ENCODE measurements at regions of chr3 and their contacts with region 1.

Region 1: GRCh38 chr3:197456261-197457091 is 99.3 kb downstream of the BDH1 start:
- DNase-seq: peak; percentile 85 to 92 (median 91)
- ATAC-seq: peak; percentile 47 to 95 (median 92)
- H3K4me3 ChIP-seq: peak overlapping the region; percentile 27 to 83 (median 61)
- H3K27ac ChIP-seq: peak overlapping the region in 11 of 12 donors; percentile 55 to 86 (median 79)
- H3K4me1 ChIP-seq: peaks cover 0 to 19% (median 8%) of the 10 kb centered on the region in 12 donors
- H3K27me3 ChIP-seq: no peaks in the 10 kb centered on the region
- CTCF ChIP-seq: no peak
- POLR2A ChIP-seq: peak in 1 of 2 donors; percentile 35

Region 2: DNA sequence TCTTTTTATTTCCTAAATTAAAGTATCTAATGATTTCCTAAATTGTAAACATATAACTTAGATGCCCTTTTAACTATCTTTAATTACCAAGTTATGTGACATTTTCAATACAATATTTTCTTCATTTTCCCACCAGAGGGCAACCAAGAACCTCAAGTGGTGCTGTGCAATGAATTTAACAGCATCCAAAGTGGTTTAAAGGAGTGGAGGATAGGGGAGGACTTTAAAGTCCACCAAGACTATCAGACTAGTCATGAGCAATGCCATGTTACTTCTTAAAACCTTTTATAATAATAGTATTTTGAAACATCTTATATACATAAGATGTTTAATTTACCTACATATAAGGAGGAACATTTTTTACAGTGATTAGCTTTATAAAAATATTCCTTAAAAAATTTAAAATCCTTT is 232.4 kb before region 1 on chr3:
- intact Hi-C with region 1: loop called in 2 of 10 experiments (anchors 10 kb)
- DNase-seq: no peak
- ATAC-seq: peak in 2 of 4 donors; percentile 41 to 54
- H3K4me3 ChIP-seq: no peak overlapping the region
- H3K27ac ChIP-seq: no peak overlapping the region
- H3K4me1 ChIP-seq: peaks cover 0 to 50% (median 20%) of the 10 kb centered on the region in 12 donors
- H3K27me3 ChIP-seq: no peaks in the 10 kb centered on the region
- CTCF ChIP-seq: peak; percentile 36 to 70 (median 52)
- POLR2A ChIP-seq: no peak

Region 3: DNA sequence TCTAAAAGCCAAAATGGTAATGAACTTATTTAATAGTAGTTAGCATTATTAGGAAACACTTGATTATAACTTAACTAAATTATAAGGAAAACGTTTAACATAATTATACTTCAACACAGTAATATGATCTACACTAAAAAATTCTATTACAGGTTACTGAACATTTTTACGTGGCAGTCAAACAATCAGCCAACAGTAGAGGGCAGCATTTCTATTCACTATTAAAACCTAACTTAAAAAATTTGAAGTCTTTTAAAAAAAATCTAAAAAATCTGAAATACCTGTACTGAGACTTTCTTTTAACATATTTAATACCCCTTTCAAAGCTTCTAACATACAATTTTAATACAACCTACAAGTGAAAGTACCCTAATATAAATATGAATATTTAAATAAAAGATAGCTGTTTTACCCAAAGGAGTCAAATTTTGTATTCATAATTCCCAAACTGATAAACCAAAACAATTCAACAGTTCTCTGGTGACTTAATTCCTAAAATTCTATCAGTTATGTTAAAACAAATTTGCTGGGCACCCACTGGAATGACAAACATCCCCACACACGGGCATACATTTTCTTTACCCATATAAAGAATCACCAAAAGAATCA is 199.5 kb before region 1 on chr3:
- intact Hi-C with region 1: loop called in 9 of 10 experiments (anchors 1 to 10 kb)
- DNase-seq: peak in 1 of 5 donors; percentile 10
- ATAC-seq: no peak
- H3K4me3 ChIP-seq: no peak overlapping the region
- H3K27ac ChIP-seq: no peak overlapping the region
- H3K4me1 ChIP-seq: peaks cover 0 to 39% (median 20%) of the 10 kb centered on the region in 12 donors
- H3K27me3 ChIP-seq: no peaks in the 10 kb centered on the region
- CTCF ChIP-seq: peak; percentile 61 to 83 (median 74)
- POLR2A ChIP-seq: no peak

Region 4: DNA sequence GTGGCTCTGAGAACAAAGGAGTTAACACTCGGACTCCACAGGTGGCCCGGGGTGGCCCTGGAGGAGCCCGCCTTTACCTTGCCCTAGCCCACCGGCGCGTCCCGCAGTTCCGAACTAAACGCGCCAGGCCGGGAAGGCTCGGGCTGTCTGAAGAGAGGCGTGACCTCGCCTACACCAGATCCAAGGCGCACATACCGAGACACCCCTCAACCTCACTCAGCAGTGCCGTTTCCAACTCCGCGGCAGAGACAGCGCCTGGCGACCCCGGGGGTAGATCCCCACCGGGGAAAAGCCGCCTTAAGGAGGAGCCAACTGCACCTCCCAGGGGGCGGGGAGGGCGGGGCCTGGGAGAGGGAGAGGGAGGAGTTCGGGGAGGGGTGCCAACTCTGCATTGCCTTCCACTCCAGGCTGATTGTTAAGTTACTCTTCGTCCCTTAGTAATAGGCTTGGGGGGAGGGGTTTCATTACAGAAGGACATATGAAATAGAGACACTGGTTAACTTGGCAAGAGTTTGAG is 158.1 kb before region 1 on chr3 and contains the start of gene DLG1:
- intact Hi-C with region 1: loop called in 6 of 10 experiments (anchors 2 to 10 kb)
- DNase-seq: peak; percentile 88 to 92 (median 91)
- ATAC-seq: peak; percentile 88 to 93 (median 89)
- H3K4me3 ChIP-seq: peak within 1 kb of the TSS; percentile 51 to 100 (median 92)
- H3K27ac ChIP-seq: peak within 1 kb of the TSS; percentile 86 to 97 (median 92)
- H3K4me1 ChIP-seq: peaks cover 0 to 36% (median 13%) of the 10 kb centered on the region in 12 donors
- H3K27me3 ChIP-seq: no peaks in the 10 kb centered on the region
- CTCF ChIP-seq: no peak
- POLR2A ChIP-seq: no peak
- total RNA-seq, gene DLG1: 37.1 to 151 (median 63.6) TPM

Region 5: DNA sequence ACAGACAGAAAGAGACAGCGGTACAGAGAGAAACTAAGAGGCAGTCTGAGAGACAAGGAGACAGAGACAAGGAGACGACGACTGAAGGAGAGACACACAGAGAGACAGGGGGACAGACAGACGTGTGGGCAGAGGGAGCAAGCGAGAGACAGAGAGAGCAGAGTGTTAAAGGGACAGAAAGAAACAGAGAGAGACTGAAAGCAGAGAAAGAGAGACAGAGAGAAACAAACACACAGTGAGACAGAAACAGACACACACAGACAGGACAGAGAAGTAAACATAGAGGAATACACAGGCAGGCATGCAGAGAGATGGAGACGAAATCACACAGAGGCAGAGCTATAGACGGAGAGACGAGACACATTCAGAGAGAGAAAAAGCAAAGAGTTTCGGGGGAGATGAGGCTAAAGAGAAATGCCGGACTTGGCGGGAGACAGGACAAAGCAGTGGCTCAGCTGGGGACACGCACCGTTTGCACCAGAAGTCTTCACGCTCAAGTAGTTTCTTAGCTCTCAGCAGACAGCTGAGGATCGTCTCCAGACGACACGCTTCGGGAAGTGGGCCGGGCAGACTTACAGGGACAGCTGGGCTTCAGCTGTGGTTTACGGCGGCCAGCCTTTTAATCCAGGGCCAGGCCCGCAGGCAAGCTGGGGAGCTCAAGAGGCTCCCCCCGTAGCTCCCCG is 102.0 kb before region 1 on chr3:
- intact Hi-C with region 1: loop called in 1 of 10 experiments (anchors 5 kb)
- DNase-seq: peak; percentile 52 to 81 (median 71)
- ATAC-seq: peak in 3 of 4 donors; percentile 4 to 41 (median 20)
- H3K4me3 ChIP-seq: peak overlapping the region in 5 of 12 donors; percentile 12 to 45 (median 41)
- H3K27ac ChIP-seq: peak overlapping the region in 10 of 12 donors; percentile 7 to 78 (median 71)
- H3K4me1 ChIP-seq: peaks cover 0 to 50% (median 24%) of the 10 kb centered on the region in 12 donors
- H3K27me3 ChIP-seq: no peaks in the 10 kb centered on the region
- CTCF ChIP-seq: no peak
- POLR2A ChIP-seq: no peak

Region 6: GRCh38 chr3:197428117-197428801 is 28.2 kb before region 1 on chr3:
- intact Hi-C with region 1: no loop called
- DNase-seq: peak; percentile 50 to 77 (median 65)
- ATAC-seq: peak; percentile 52 to 91 (median 76)
- H3K4me3 ChIP-seq: no peak overlapping the region
- H3K27ac ChIP-seq: peak overlapping the region in 4 of 12 donors; percentile 12 to 56 (median 38)
- H3K4me1 ChIP-seq: peaks cover 0 to 40% (median 25%) of the 10 kb centered on the region in 12 donors
- H3K27me3 ChIP-seq: no peaks in the 10 kb centered on the region
- CTCF ChIP-seq: no peak
- POLR2A ChIP-seq: peak in 1 of 2 donors; percentile 16

Region 7: GRCh38 chr3:197511130-197511529 is 54.7 kb after region 1 on chr3:
- intact Hi-C with region 1: loop called in 1 of 10 experiments (anchors 2 kb)
- DNase-seq: no peak
- ATAC-seq: no peak
- H3K4me3 ChIP-seq: no peak overlapping the region
- H3K27ac ChIP-seq: no peak overlapping the region
- H3K4me1 ChIP-seq: peaks cover 0 to 10% (median 5%) of the 10 kb centered on the region in 12 donors
- H3K27me3 ChIP-seq: no peaks in the 10 kb centered on the region
- CTCF ChIP-seq: no peak
- POLR2A ChIP-seq: no peak